ENCODE measurements at regions of chr1 and their contacts with region 1.

Region 1: GRCh38 chr1:229514578-229515275 is 6.6 kb upstream of the NUP133 start:
- DNase-seq: peak; percentile 57 to 69 (median 64)
- H3K4me3 ChIP-seq: no peak overlapping the region
- H3K4me3 Mint-ChIP-seq: no peak overlapping the region
- H3K27ac ChIP-seq: no peak overlapping the region
- H3K27ac Mint-ChIP-seq: peak overlapping the region in 1 of 7 donors; percentile 50
- H3K4me1 ChIP-seq: peaks cover 0 to 4% of the 10 kb centered on the region in 2 donors
- H3K4me1 Mint-ChIP-seq: peaks cover 5% of the 10 kb centered on the region
- H3K27me3 ChIP-seq: no peaks in the 10 kb centered on the region
- H3K27me3 Mint-ChIP-seq: peaks cover 0 to 3% (median 0%) of the 10 kb centered on the region in 3 donors
- CTCF ChIP-seq: peak; percentile 79

Region 2: DNA sequence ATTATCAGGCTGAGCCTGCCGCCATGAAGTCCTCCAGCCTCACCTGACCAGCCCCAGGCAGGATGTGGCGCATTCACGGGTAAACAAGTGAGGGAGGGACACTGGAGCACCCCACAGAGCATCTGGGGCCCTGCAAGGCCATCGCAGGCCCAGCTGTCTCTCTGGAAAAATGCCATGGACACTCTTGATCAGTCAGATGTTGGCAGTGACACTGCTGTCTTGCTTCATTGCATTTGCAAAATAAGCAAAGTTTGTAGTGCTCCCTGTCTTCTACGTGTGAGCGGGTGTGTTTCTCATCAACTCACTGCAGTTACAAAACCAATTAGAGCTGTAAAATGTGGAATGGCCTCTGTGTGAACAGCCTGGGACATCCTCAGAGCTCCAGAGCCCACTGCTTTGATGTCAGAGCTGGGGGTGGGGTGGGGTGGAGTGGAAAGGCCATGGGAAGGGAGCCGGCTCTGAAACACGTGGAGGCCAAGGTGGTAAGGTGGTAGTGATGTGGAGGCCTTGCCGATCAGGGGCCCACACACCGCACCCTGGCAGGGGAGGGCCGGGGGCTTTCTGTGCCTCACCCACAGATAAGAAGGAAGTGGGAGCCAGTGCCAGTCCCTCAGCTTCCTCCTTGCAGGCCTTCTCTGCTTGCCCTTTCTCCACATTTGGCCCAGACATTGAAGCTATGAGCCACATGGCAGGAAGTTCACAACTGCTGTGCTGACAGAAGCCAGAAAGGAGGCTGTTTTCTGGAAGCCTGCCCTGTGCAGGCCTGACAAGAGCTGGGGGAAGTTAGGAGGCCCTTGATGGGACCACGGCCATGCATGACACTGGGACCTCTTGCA is 524.5 kb before region 1 on chr1:
- intact Hi-C with region 1: no loop called
- DNase-seq: peak; percentile 86 to 93 (median 87)
- H3K4me3 ChIP-seq: peak overlapping the region in 1 of 3 experiments; percentile 23
- H3K4me3 Mint-ChIP-seq: peak overlapping the region in 1 of 2 donors; percentile 39
- H3K27ac ChIP-seq: peak overlapping the region; percentile 91 to 92
- H3K27ac Mint-ChIP-seq: peak overlapping the region; percentile 92 to 98 (median 96)
- H3K4me1 ChIP-seq: peaks cover 86 to 96% of the 10 kb centered on the region in 2 donors
- H3K4me1 Mint-ChIP-seq: peaks cover 93% of the 10 kb centered on the region
- H3K27me3 ChIP-seq: no peaks in the 10 kb centered on the region
- H3K27me3 Mint-ChIP-seq: no peaks in the 10 kb centered on the region
- CTCF ChIP-seq: no peak

Region 3: GRCh38 chr1:229264487-229264886 is 250.2 kb before region 1 on chr1:
- intact Hi-C with region 1: loop called (anchors 2 to 5 kb)
- DNase-seq: peak in 1 of 3 donors; percentile 41
- H3K4me3 ChIP-seq: no peak overlapping the region
- H3K4me3 Mint-ChIP-seq: no peak overlapping the region
- H3K27ac ChIP-seq: no peak overlapping the region
- H3K27ac Mint-ChIP-seq: no peak overlapping the region
- H3K4me1 ChIP-seq: peaks cover 11 to 12% of the 10 kb centered on the region in 2 donors
- H3K4me1 Mint-ChIP-seq: peaks cover 25% of the 10 kb centered on the region
- H3K27me3 ChIP-seq: no peaks in the 10 kb centered on the region
- H3K27me3 Mint-ChIP-seq: peaks cover 0 to 2% (median 2%) of the 10 kb centered on the region in 3 donors
- CTCF ChIP-seq: no peak

Region 4: DNA sequence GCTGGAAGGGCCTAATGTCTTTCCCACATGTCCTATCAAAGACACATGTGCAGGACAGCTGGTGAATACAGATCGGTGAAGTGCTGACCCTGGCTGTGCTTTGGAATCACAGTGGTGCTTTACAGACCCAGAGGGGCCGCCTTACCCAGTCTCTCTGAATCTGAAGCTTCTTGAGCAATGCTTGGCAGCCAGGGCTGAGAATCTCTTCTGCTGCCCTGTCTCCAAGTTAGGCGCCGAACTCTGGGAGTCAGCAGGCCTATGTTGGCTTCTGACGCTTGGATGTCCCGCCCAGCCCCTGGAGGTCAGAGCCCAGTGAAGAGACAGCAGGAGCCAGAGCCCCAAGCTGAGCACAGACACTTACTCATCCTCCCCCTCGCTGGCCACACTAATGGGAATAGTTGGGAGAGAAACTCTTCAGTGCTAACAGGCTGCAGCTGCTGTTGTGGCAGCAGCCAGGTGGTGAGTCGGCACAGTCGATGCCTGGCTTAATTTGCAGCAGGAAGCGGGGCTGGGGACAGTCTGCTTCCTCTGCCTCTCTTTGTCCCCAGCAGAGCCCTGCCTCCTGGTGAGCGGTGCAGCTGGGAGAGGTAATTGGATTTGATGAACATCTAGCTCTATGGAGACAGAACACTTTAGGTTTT is 179.4 kb after region 1 on chr1:
- intact Hi-C with region 1: no loop called
- DNase-seq: no peak
- H3K4me3 ChIP-seq: no peak overlapping the region
- H3K4me3 Mint-ChIP-seq: no peak overlapping the region
- H3K27ac ChIP-seq: no peak overlapping the region
- H3K27ac Mint-ChIP-seq: no peak overlapping the region
- H3K4me1 ChIP-seq: no peaks in the 10 kb centered on the region
- H3K4me1 Mint-ChIP-seq: no peaks in the 10 kb centered on the region
- H3K27me3 ChIP-seq: no peaks in the 10 kb centered on the region
- H3K27me3 Mint-ChIP-seq: peaks cover 3 to 9% (median 6%) of the 10 kb centered on the region in 3 donors
- CTCF ChIP-seq: no peak